T-cell (primary cell): ENCODE measurements at regions of chr17 and their contacts with region 1.

Region 1: DNA sequence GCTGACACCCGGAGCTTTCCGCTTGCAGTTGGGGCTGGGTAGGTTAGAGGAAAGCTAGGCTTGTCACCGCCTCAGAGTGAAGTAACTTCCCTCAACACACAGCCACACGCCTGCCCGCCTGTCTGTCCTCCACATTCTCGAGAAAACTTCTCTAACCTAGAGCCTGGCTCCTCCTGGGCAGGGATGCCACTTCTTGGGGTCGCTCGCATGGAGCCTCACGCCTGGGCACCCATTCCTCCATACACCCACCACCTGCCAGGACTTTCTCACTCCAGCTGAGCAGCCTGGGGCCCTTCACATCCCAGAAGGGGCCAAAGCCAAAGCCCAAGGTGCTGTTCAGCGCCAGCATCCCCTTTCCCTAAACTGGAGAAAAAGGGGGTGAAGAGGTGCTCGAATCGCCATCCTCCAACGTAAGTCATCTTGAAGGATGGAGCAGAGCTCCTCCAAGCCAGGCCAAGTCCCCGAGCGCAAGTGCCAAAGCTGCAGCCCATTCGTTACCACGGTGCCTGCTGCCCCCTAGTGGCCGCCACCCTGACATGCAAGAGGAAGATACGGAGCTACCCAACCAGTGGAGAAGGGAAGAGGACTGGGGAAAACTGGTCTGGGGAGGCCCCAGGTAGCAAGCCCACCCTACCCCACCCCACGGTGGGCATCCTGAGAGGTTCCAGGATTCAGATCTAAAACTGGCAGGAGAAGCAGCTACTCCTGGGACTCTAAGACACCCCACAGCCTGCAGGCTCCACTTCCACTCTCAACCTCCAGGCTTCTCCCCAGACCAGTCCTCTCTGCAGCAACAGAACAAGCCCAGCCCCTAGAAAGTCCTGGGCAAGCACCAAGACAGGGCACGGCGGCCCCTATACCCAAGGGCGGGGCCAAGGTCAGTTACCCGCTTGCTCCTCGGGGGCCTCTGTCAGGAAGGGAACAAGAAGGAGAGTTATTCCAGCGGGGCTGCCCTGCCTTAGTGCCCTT is 63.1 kb downstream of the MYO18A start:
- DNase-seq: peak; percentile 41 to 86 (median 71)
- ATAC-seq: peak; percentile 75 to 80 (median 78)
- H3K4me3 ChIP-seq: no peak overlapping the region
- H3K4me3 Mint-ChIP-seq: no peak overlapping the region
- H3K27ac ChIP-seq: no peak overlapping the region
- H3K27ac Mint-ChIP-seq: no peak overlapping the region
- H3K4me1 ChIP-seq: peaks cover 0 to 21% of the 10 kb centered on the region in 2 experiments
- H3K4me1 Mint-ChIP-seq: peaks cover 5 to 8% (median 8%) of the 10 kb centered on the region in 3 donors
- H3K27me3 ChIP-seq: no peaks in the 10 kb centered on the region
- H3K27me3 Mint-ChIP-seq: no peaks in the 10 kb centered on the region

Region 2: DNA sequence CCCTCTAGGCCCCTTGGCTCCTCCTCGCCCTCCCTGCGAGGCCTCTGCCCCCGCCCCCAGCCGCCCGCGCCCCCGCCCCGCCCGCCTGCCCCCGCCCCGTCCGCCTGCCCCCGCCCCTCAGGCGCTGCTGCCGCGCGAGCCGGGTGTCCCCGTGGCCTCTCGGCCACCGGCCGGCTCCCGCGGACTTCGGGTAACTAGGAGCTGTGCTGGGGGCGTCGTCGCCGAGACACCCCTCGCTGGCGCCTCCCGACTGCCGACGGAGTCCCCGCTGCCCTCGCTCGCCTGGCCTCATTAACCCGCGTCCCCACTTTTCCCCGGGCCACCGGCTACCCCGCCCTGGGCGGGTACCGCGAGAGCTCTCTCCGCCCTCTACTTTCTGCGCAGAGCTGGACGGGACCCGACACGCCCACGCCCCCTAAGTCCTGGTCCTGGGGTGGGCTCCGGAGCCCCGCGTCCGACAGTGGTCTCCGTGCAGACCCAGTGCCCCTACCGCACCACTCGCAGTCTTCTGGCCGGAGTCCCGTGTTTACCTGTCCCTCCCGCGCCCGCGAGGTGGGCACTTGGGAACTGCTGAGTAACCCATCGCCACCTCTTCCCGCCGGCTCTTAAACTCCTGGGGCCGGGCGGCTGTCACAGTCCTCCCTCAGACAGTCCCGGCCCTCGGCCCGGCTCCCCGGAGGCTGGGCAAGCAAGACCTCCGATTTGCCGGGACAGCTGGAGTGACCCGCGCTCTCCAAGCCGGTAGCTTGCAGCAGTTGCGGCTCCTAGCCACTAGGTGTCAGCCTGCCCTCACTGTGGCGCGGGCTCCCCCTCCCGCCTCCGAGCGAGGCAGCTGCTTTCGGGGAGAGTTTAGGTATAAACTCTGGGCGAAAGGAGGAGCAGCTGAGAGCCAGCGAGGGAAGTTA is 390.6 kb before region 1 on chr17 and contains the start of gene TLCD1:
- CTCF ChIA-PET with region 1: interaction called in 1 of 2 experiments, 10 read pairs
- POLR2A ChIA-PET with region 1: no interaction called
- DNase-seq: peak; percentile 74 to 94 (median 86)
- ATAC-seq: peak; percentile 37 to 61 (median 53)
- H3K4me3 ChIP-seq: peak within 1 kb of the TSS; percentile 86 to 87
- H3K4me3 Mint-ChIP-seq: peak within 1 kb of the TSS; percentile 93 to 100 (median 95)
- H3K27ac ChIP-seq: peak within 1 kb of the TSS; percentile 100
- H3K27ac Mint-ChIP-seq: peak within 1 kb of the TSS; percentile 96 to 99
- H3K4me1 ChIP-seq: peaks cover 16 to 58% of the 10 kb centered on the region in 2 experiments
- H3K4me1 Mint-ChIP-seq: peaks cover 51 to 62% (median 59%) of the 10 kb centered on the region in 3 donors
- H3K27me3 ChIP-seq: no peaks in the 10 kb centered on the region
- H3K27me3 Mint-ChIP-seq: no peaks in the 10 kb centered on the region
- total RNA-seq, gene TLCD1: 1.2 to 1.8 (median 1.3) TPM in 4 of 5 donors, not detected in the other

Region 3: DNA sequence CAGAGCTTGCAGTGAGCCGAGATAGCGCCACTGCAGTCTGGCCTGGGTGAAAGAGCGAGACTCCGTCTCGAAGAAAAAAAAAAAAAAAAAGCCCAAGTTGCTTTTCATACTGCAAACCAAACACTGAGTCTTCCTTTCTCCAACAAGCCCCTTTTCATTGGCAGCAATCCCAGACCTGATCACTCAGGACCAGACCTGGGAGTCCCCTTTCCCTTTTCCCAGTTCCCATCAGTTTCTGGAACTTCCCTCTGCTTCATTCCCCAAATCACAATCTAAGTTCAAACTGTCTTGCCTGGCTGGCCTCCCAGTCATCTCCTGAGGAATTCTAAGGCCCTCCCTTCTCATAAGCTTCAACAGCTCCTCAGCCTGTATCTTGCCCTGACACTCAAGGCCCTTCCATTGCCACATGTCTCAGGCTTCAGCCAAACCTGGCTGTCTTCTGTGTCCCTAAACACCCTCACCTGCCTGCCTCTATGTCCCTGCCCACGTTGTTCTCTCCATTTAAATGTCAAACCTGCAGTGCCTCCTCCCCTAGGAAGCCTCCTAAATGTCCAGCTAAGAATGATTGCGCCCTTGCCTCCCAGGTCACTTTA is 153.9 kb before region 1 on chr17:
- CTCF ChIA-PET with region 1: interaction called, 14 to 74 read pairs
- POLR2A ChIA-PET with region 1: no interaction called
- DNase-seq: no peak
- ATAC-seq: no peak
- H3K4me3 ChIP-seq: no peak overlapping the region
- H3K4me3 Mint-ChIP-seq: no peak overlapping the region
- H3K27ac ChIP-seq: no peak overlapping the region
- H3K27ac Mint-ChIP-seq: no peak overlapping the region
- H3K4me1 ChIP-seq: peaks cover 0 to 4% of the 10 kb centered on the region in 2 experiments
- H3K4me1 Mint-ChIP-seq: peaks cover 0 to 2% (median 0%) of the 10 kb centered on the region in 3 donors
- H3K27me3 ChIP-seq: peaks cover 0 to 33% of the 10 kb centered on the region in 2 experiments
- H3K27me3 Mint-ChIP-seq: peaks cover 14 to 16% of the 10 kb centered on the region in 2 donors

Region 4: DNA sequence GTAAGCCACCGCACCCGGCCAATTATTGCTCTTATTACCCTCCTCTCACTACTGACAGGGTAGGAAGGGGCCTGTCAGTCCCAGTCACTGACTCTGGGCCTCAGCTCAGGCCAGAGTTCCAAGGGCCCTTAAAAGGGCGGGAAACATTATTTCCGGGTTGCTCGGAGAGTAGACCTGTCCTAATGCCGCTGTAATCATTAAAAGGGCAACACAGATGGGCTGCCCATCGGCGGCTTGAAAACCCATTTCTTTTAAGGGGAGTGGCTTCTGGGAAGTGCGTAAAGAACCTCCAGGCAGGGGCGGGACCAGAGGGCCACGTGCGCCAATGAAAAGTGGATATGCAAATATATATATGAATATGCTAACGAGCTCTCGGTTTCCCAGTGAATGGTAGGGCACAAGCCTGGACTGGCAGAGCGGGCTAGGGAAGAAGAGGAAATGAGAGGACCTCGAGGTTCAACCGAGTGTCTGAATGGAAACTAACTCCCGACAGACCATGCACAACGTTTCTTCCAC is 47.5 kb before region 1 on chr17:
- CTCF ChIA-PET with region 1: no interaction called
- POLR2A ChIA-PET with region 1: no interaction called
- DNase-seq: no peak
- ATAC-seq: no peak
- H3K4me3 ChIP-seq: no peak overlapping the region
- H3K4me3 Mint-ChIP-seq: no peak overlapping the region
- H3K27ac ChIP-seq: no peak overlapping the region
- H3K27ac Mint-ChIP-seq: no peak overlapping the region
- H3K4me1 ChIP-seq: peaks cover 0 to 5% of the 10 kb centered on the region in 2 experiments
- H3K4me1 Mint-ChIP-seq: peaks cover 0 to 6% (median 5%) of the 10 kb centered on the region in 3 donors
- H3K27me3 ChIP-seq: no peaks in the 10 kb centered on the region
- H3K27me3 Mint-ChIP-seq: no peaks in the 10 kb centered on the region

Region 5: GRCh38 chr17:29131814-29132682 is 15.0 kb after region 1 on chr17:
- CTCF ChIA-PET with region 1: interaction called, 6 to 10 read pairs
- POLR2A ChIA-PET with region 1: no interaction called
- DNase-seq: no peak
- ATAC-seq: no peak
- H3K4me3 ChIP-seq: no peak overlapping the region
- H3K4me3 Mint-ChIP-seq: no peak overlapping the region
- H3K27ac ChIP-seq: no peak overlapping the region
- H3K27ac Mint-ChIP-seq: peak overlapping the region; percentile 74
- H3K4me1 ChIP-seq: peaks cover 0 to 46% of the 10 kb centered on the region in 2 experiments
- H3K4me1 Mint-ChIP-seq: peaks cover 27 to 42% (median 34%) of the 10 kb centered on the region in 3 donors
- H3K27me3 ChIP-seq: no peaks in the 10 kb centered on the region
- H3K27me3 Mint-ChIP-seq: no peaks in the 10 kb centered on the region

Region 6: DNA sequence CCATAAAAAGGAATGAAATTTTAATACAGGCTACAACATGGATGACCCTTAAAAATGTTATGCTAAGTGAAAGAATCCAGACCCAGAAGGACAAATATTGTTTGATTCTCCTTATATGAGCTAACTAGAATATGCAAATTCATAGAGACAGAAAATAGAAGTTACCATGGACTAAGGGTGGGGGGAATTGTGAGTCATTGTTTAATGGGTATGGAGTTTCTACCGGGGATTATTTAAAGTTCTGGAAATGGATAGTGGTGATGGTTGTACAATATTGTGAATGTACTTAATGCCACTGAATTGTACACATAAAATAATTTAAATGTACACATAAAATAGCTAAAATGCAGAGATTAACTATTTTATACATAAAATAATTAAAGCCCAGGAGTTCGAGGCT is 72.3 kb after region 1 on chr17:
- CTCF ChIA-PET with region 1: no interaction called
- POLR2A ChIA-PET with region 1: interaction called in 1 of 2 experiments, 11 read pairs
- DNase-seq: no peak
- ATAC-seq: no peak
- H3K4me3 ChIP-seq: no peak overlapping the region
- H3K4me3 Mint-ChIP-seq: no peak overlapping the region
- H3K27ac ChIP-seq: no peak overlapping the region
- H3K27ac Mint-ChIP-seq: no peak overlapping the region
- H3K4me1 ChIP-seq: no peaks in the 10 kb centered on the region
- H3K4me1 Mint-ChIP-seq: no peaks in the 10 kb centered on the region
- H3K27me3 ChIP-seq: peaks cover 0 to 11% of the 10 kb centered on the region in 2 experiments
- H3K27me3 Mint-ChIP-seq: peaks cover 10 to 21% of the 10 kb centered on the region in 2 donors